ENCODE measurements at regions of chr9 and their contacts with region 1.

Region 1: GRCh38 chr9:132288361-132288760 is 66.4 kb downstream of the SETX start:
- DNase-seq: no peak
- ATAC-seq: peak in 1 of 2 donors; percentile 65
- H3K4me3 ChIP-seq: no peak overlapping the region
- H3K27ac ChIP-seq: peak overlapping the region in 3 of 4 donors; percentile 26 to 72 (median 39)
- H3K4me1 ChIP-seq: peaks cover 10 to 11% of the 10 kb centered on the region in 2 donors
- H3K27me3 ChIP-seq: no peaks in the 10 kb centered on the region
- CTCF ChIP-seq: no peak
- POLR2A ChIP-seq: no peak

Region 2: DNA sequence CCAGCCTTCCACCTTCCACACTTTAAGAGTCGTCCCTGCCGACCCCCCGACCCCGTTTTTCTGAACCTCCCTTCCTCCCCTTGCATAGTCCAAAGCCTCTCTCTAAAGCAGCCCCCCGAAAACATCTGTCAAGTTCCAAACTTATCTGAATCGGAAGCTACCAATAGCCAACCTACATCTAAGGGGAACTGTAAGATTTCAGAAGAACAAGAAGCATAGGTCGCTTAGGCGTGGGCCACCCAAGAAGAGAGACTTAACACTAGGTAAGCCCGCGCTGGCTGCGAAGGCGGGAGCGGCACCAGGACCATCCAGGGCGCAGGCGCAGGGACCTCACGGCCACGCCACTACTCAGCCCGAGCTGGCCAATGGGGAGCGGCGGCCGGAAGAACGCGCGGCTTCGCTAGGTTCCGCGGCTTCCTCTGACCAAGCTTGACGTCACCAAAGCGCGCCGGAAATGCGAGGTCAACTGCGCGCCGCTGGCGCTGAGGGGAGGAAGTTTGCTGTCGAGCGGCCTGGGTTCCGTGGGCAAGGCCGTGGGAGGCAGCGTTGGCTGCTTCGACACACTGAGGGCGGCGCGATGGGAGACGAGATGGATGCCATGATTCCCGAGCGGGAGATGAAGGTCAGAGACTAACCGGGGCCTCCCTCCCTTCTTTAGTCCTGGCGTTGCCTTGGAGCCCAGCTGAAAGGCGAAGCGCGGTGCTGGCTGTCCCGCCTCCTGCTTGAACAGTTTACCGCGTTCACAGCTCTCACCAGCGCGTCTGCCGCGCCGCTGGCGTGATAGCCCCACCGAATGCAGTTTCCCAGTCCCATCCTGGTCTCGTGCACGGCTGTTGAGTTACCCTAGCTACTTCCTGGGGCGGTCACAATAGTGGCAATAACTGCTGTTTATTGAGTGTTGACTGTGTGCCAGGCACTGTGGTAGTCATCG is 1163.0 kb before region 1 on chr9 and contains the start of gene NUP214:
- in situ Hi-C with region 1: loop called in 1 of 4 experiments (anchors 25 kb)
- intact Hi-C with region 1: no loop called
- DNase-seq: peak; percentile 98
- ATAC-seq: peak; percentile 95 to 96
- H3K4me3 ChIP-seq: peak within 1 kb of the TSS; percentile 91 to 98 (median 94)
- H3K27ac ChIP-seq: peak within 1 kb of the TSS; percentile 81 to 93 (median 91)
- H3K4me1 ChIP-seq: peaks cover 20 to 21% of the 10 kb centered on the region in 2 donors
- H3K27me3 ChIP-seq: no peaks in the 10 kb centered on the region
- CTCF ChIP-seq: peak in 2 of 5 experiments; percentile 29 to 42
- POLR2A ChIP-seq: peak; percentile 71 to 82
- total RNA-seq, gene NUP214: 24.2 to 47.5 (median 29.9) TPM

Region 3: DNA sequence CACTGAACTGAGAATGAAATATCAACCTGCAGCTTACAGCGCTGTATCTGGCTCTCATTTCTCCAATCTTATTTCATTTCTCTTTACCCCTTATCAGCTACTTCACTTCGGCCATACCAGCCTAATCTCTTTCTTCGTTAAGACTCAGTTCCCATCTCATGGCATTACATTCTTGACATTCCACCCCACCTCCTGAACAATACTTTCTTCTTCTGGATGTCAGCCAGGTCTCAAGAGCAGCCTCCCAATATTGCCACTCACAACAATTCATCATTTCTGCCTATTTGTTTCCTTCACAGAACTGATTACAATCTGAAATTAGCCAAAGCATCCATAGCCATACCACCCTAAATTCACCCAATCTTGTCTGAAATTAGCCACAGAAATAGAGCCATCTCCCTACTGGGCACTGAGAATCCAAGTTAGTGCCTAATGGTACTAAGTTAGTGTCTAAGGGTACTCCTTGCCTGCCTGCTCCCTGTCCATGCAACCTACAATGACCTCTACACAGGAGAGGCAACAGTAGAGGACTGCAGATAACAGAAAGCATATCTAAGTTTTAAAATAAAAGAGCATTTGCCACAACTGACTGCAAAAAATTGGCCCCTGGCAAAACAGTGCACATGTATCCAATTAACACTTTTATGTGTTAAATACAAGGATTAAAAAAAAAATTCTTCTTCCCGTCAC is 31.2 kb after region 1 on chr9:
- in situ Hi-C with region 1: no loop called
- intact Hi-C with region 1: no loop called
- DNase-seq: no peak
- ATAC-seq: no peak
- H3K4me3 ChIP-seq: no peak overlapping the region
- H3K27ac ChIP-seq: no peak overlapping the region
- H3K4me1 ChIP-seq: peaks cover 4 to 19% of the 10 kb centered on the region in 2 donors
- H3K27me3 ChIP-seq: no peaks in the 10 kb centered on the region
- CTCF ChIP-seq: no peak
- POLR2A ChIP-seq: no peak

Measured in gastrocnemius medialis (tissue), 4 donors.